ENCODE measurements at regions of chr2 and their contacts with region 1.

Region 1: DNA sequence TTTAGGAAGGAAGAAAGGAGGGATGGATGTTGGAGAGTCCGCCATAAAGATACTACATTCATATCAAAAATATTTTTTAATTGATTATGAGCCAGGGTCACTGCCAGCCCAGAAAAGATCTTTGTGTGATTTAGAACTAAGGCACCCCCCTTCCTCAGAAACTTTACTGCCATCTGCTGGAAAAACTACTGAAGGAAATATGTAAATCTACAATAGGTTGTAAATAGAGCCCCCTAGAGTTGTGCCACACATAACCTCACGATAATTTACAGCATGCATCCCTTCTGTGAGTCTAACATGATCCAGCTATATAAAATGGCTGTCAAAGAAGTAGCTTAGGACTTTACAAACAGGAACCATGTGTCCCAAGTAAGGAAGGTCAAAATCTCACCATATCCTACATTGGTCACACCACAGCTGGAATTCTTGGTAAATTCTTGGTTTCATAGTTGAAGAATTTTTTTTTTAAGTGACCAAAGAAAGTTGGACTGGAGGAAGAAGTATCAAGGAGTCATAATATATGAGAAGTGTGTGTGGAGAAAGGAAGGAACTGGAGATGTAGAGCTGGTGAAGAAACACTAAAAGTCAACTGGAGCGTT is 152.5 kb downstream of the CYP26B1 start:
- DNase-seq: no peak
- H3K4me3 ChIP-seq: no peak overlapping the region
- H3K27ac ChIP-seq: no peak overlapping the region
- H3K4me1 ChIP-seq: no peaks in the 10 kb centered on the region
- H3K27me3 ChIP-seq: no peaks in the 10 kb centered on the region
- CTCF ChIP-seq: peak in 2 of 3 donors; percentile 22 to 26
- POLR2A ChIP-seq: no peak

Region 2: GRCh38 chr2:71592181-71592711 is 402.9 kb before region 1 on chr2:
- intact Hi-C with region 1: loop called (anchors 5 kb)
- DNase-seq: no peak
- H3K4me3 ChIP-seq: no peak overlapping the region
- H3K27ac ChIP-seq: no peak overlapping the region
- H3K4me1 ChIP-seq: no peaks in the 10 kb centered on the region
- H3K27me3 ChIP-seq: no peaks in the 10 kb centered on the region
- CTCF ChIP-seq: no peak
- POLR2A ChIP-seq: no peak

Region 3: GRCh38 chr2:72214429-72215143 is 219.4 kb after region 1 on chr2:
- intact Hi-C with region 1: no loop called
- DNase-seq: no peak
- H3K4me3 ChIP-seq: no peak overlapping the region
- H3K27ac ChIP-seq: no peak overlapping the region
- H3K4me1 ChIP-seq: no peaks in the 10 kb centered on the region
- H3K27me3 ChIP-seq: no peaks in the 10 kb centered on the region
- CTCF ChIP-seq: no peak
- POLR2A ChIP-seq: no peak

Measured in breast epithelium (tissue), 4 donors.